Mammary epithelial cell (primary cell): ENCODE measurements at regions of chr5 and their contacts with region 1.

Region 1: DNA sequence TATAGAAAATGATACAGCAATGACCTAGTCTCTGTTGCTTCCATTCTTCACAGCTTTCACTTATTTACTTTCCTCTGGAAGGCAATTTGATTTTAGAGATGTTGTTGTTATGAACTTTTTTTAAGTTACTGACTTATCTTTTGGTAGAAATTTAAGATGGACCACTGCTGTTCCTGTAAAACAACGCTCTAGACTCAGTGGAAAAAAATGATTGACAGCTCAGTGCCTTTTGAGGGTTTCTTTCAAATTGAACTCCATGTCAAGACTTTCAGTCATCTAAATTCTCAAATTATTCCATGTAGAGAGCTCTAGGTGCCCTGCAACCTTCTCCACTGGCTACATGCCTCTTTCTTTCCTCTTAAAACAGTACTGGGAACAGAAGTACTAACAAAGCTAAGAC is 263.2 kb downstream of the TMEM161B start:
- DNase-seq: no peak
- H3K4me3 ChIP-seq: no peak overlapping the region
- H3K27ac ChIP-seq: no peak overlapping the region
- H3K4me1 ChIP-seq: no peaks in the 10 kb centered on the region
- H3K27me3 ChIP-seq: no peaks in the 10 kb centered on the region
- CTCF ChIP-seq: no peak

Region 2: GRCh38 chr5:87949676-87950631 is 55.5 kb before region 1 on chr5:
- CTCF ChIA-PET with region 1: no interaction called
- dilution Hi-C with region 1: no loop called
- in situ Hi-C with region 1: no loop called
- intact Hi-C with region 1: loop called (anchors 5 kb)
- DNase-seq: no peak
- H3K4me3 ChIP-seq: no peak overlapping the region
- H3K27ac ChIP-seq: no peak overlapping the region
- H3K4me1 ChIP-seq: no peaks in the 10 kb centered on the region
- H3K27me3 ChIP-seq: peaks cover 2% of the 10 kb centered on the region
- CTCF ChIP-seq: no peak

Region 3: GRCh38 chr5:88089719-88090390 is 84.4 kb after region 1 on chr5:
- CTCF ChIA-PET with region 1: no interaction called
- dilution Hi-C with region 1: no loop called
- in situ Hi-C with region 1: no loop called
- intact Hi-C with region 1: no loop called
- DNase-seq: no peak
- H3K4me3 ChIP-seq: no peak overlapping the region
- H3K27ac ChIP-seq: no peak overlapping the region
- H3K4me1 ChIP-seq: no peaks in the 10 kb centered on the region
- H3K27me3 ChIP-seq: no peaks in the 10 kb centered on the region
- CTCF ChIP-seq: no peak